ENCODE measurements at regions of chr5 and their contacts with region 1.

Region 1: DNA sequence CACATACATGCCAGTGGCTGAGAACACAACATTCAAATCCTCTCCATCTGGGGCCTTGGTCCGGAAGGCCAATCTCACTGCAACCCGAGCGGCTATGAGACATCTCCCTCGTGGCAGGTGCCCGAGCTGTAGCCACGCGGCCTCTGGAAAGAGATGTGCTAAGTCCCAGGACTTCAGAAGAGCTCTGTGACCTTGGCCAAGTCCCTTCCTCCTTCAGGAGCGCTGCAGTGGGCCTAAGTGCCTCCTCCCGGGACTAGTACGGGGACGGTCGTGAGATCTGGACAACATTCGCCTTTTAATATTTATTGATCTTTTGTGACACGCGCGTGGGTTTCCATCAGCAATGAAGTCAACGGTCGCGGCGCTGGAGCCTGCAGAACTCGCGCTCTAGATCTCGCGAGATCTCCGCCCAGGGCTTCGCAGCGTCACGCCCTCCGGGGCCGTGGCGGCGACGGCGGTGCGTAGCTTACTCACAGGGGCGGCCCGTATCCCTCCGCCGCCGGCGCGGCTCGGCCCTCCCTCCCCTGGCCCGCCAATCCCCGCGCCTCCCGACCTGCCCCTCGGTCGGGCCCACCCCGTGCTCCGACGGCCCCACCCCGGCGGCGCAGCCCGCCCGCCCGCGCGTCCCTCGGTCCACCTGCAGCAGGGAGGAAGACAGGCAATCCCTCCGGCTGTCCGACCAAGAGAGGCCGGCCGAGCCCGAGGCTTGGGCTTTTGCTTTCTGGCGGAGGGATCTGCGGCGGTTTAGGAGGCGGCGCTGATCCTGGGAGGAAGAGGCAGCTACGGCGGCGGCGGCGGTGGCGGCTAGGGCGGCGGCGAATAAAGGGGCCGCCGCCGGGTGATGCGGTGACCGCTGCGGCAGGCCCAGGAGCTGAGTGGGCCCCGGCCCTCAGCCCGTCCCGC is at the start of gene UBE2D2:
- DNase-seq: peak; percentile 98
- H3K4me3 Mint-ChIP-seq: peak within 1 kb of the TSS; percentile 90
- H3K27ac Mint-ChIP-seq: peak within 1 kb of the TSS; percentile 92
- H3K4me1 Mint-ChIP-seq: peaks cover 25% of the 10 kb centered on the region
- H3K27me3 Mint-ChIP-seq: no peaks in the 10 kb centered on the region
- total RNA-seq, gene UBE2D2: 271 to 285 TPM

Region 2: GRCh38 chr5:139341650-139342422 is 219.2 kb before region 1 on chr5 and contains the start of gene PAIP2:
- CTCF ChIA-PET with region 1: no interaction called
- POLR2A ChIA-PET with region 1: no interaction called
- intact Hi-C with region 1: loop called (anchors 5 kb)
- DNase-seq: peak; percentile 98
- H3K4me3 Mint-ChIP-seq: peak within 1 kb of the TSS; percentile 97
- H3K27ac Mint-ChIP-seq: peak within 1 kb of the TSS; percentile 95
- H3K4me1 Mint-ChIP-seq: peaks cover 46% of the 10 kb centered on the region
- H3K27me3 Mint-ChIP-seq: no peaks in the 10 kb centered on the region
- total RNA-seq, gene PAIP2: 104 to 110 TPM

Region 3: DNA sequence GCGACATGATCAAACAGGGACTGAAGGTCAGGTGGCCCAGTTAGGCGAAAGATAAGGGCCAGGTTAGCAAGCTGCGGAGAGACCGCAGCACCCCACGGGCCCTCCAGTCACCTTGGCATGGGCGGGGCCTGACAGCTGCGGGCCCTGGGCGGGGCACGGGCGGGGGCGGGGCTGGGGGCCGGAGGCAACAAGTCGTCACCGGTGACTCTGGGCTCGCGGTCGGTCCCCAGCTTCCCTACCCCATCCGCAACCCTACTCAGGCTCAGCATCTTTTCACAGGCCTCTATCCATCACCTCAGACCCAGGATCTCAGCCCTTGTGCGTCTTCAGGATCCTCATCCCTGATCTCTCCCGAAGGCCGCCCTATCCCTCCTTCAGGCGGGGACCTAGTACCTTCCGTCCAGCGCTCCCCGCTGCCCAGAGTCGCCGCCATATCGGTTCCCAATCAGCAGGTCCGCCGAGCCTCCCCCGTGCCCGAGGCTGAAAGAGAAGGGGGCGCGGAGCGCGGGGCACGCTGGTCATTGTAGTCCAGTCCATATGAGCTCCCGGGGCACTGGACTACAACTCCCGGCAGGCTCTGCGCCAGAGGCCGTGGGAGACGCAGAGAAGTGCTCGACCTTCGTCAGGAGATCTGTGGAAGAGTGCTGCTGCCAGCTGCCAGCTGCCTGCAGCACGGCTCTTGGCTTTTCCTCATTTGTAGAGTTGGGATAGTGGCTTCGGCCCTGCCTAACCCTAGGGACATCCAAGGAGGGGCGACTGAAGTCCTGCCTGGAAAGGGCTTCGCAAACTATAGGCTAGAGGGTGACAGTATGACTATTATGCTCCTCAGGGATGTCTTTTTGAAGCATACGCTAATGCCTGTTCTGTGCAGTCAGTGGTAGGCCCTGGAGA is 121.7 kb before region 1 on chr5 and contains the start of gene DNAJC18:
- CTCF ChIA-PET with region 1: no interaction called
- POLR2A ChIA-PET with region 1: interaction called, 9 read pairs
- intact Hi-C with region 1: loop called (anchors 1 kb)
- DNase-seq: peak; percentile 96
- H3K4me3 Mint-ChIP-seq: peak within 1 kb of the TSS; percentile 98
- H3K27ac Mint-ChIP-seq: peak within 1 kb of the TSS; percentile 99
- H3K4me1 Mint-ChIP-seq: peaks cover 62% of the 10 kb centered on the region
- H3K27me3 Mint-ChIP-seq: no peaks in the 10 kb centered on the region
- total RNA-seq, gene DNAJC18: 54.1 to 56.0 TPM

Region 4: GRCh38 chr5:139531772-139532169 is 29.2 kb before region 1 on chr5:
- CTCF ChIA-PET with region 1: no interaction called
- POLR2A ChIA-PET with region 1: no interaction called
- intact Hi-C with region 1: no loop called
- DNase-seq: no peak
- H3K4me3 Mint-ChIP-seq: no peak overlapping the region
- H3K27ac Mint-ChIP-seq: no peak overlapping the region
- H3K4me1 Mint-ChIP-seq: no peaks in the 10 kb centered on the region
- H3K27me3 Mint-ChIP-seq: no peaks in the 10 kb centered on the region

Region 5: GRCh38 chr5:139574641-139575312 is 13.8 kb after region 1 on chr5:
- CTCF ChIA-PET with region 1: interaction called, 56 read pairs
- POLR2A ChIA-PET with region 1: interaction called, 7 read pairs
- intact Hi-C with region 1: loop called (anchors 1 kb)
- DNase-seq: no peak
- H3K4me3 Mint-ChIP-seq: no peak overlapping the region
- H3K27ac Mint-ChIP-seq: peak overlapping the region; percentile 5
- H3K4me1 Mint-ChIP-seq: peaks cover 70% of the 10 kb centered on the region
- H3K27me3 Mint-ChIP-seq: no peaks in the 10 kb centered on the region

Region 6: DNA sequence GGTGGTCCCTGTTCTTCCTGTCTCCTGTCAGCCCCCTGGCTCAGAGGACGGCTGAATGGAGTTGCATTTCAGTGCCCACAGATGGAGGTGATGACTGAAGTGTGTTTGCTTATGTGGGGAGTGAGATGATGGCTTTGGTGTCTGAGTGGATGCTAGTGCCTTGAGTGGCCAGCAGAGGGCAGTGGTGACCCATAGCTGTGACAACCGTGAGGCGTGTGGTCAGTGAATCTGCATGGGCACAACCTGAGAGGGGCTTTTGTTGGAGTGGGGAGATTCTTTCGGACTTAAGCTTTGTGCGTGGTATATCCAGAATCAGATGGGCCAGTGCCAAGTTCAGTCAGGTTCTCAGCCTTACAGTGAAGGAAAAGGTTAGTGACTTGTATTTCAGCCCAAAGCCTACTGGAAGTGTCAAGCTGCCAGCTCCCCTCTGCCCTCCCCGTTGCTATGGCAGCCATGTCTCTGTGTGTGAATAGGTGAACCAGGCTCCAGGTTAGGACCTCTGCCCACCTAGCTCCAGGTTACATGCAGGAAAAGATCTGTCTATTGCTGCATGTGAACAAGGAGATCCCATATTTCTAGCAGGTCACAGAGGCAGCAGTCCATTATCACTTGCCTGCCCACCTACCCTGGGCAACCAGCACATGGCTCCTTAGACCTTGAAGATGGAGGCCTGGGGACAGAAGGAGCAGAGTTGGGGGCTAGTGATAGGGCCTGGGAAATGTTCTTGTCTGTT is 72.5 kb after region 1 on chr5:
- CTCF ChIA-PET with region 1: interaction called, 6 read pairs
- POLR2A ChIA-PET with region 1: interaction called, 3 read pairs
- intact Hi-C with region 1: loop called (anchors 2 kb)
- DNase-seq: peak; percentile 76
- H3K4me3 Mint-ChIP-seq: no peak overlapping the region
- H3K27ac Mint-ChIP-seq: peak overlapping the region; percentile 23
- H3K4me1 Mint-ChIP-seq: peaks cover 40% of the 10 kb centered on the region
- H3K27me3 Mint-ChIP-seq: no peaks in the 10 kb centered on the region

Region 7: DNA sequence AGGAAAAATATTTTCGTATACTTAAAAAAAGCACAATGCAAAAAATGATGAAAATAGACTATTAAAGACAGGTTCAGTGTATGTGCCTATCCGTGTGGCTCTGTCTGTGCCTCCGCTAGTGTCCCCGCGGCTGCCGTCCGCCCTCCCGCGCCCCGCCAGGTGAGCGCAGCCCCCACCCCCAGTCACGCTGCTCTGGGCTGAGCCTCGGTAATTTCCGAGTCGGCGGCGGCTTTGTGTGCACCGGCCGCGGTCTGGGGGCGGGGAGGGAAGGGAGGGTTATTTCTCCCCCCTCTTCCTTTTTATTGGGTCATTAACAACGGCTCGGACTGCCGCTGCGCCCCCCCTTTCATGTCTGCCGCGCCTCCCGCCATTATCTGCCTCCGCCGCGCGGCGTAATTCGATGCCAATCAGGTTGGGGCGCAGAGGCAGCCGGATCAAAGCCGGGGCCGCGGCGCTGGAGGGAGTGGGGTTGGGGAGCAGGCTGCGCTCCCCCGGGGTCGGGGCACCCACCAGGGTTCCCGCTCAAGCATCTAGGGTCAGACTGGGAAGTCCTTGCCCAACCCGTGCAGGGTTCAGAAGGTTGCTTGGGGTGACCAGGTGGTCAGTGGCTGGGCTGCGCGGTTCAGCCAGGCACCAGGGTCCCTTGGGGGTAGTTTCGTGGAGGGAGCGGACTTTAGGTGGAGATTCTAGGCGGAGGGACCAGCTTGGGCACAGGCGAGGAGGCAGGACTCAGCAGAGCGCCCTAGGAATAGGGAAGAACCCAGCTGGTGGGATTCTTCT is 195.1 kb after region 1 on chr5:
- CTCF ChIA-PET with region 1: no interaction called
- POLR2A ChIA-PET with region 1: no interaction called
- intact Hi-C with region 1: no loop called
- DNase-seq: peak; percentile 34
- H3K4me3 Mint-ChIP-seq: no peak overlapping the region
- H3K27ac Mint-ChIP-seq: no peak overlapping the region
- H3K4me1 Mint-ChIP-seq: peaks cover 20% of the 10 kb centered on the region
- H3K27me3 Mint-ChIP-seq: peaks cover 29% of the 10 kb centered on the region